Head of caudate nucleus (tissue), 42 donors: ENCODE measurements at regions of chr18 and their contacts with region 1.

Region 1: GRCh38 chr18:2932247-2933181 is 80.4 kb downstream of the LPIN2 start:
- DNase-seq: peak in 14 of 42 donors; percentile 22 to 83 (median 63)

Region 2: DNA sequence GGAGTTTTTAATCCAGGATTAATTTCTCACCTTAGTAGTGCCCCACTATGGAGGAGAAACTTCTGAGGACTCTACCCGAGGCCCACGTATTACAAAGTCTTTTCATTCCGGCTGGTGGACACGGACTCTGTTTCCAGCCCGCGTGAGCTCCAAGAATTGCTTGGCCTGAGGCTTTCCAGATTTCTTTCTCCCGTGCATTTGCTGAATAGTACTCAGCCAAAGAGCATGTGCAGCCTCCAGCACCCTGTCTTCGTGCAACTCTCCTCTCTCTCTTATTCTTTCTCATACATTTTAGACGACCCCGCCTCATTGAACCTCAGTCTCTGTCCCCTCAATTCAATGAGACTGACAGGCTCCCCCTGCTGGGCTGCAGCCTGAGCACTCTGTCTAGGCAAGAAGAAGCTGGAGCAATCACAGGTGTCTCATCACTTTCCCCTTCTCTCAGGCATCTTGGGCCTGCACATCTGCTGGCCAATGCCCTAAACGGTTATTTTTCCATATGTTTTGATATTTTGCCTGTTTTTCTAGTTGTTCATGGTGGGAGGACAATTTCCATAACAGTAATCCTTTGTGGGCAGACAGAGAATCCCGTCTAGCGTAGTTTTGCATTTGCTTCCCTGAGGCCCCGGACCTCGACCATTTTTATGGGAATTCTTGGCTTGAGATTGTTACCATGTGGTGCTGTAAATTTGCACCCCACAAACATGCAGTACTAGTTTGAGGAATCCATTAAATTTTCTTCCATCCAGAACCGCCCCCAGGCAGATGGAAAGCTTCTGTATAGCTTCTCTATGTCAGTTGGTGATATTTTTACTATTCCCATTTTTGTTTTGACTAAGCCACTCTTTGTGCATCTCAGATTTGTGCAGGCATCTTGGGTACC is 130.5 kb after region 1 on chr18:
- intact Hi-C with region 1: loop called (anchors 5 kb)
- DNase-seq: peak; percentile 57 to 89 (median 76)

Region 3: GRCh38 chr18:3151399-3152264 is 219.1 kb after region 1 on chr18:
- intact Hi-C with region 1: loop called (anchors 10 kb)
- DNase-seq: peak in 5 of 42 donors; percentile 7 to 27 (median 26)

Region 4: DNA sequence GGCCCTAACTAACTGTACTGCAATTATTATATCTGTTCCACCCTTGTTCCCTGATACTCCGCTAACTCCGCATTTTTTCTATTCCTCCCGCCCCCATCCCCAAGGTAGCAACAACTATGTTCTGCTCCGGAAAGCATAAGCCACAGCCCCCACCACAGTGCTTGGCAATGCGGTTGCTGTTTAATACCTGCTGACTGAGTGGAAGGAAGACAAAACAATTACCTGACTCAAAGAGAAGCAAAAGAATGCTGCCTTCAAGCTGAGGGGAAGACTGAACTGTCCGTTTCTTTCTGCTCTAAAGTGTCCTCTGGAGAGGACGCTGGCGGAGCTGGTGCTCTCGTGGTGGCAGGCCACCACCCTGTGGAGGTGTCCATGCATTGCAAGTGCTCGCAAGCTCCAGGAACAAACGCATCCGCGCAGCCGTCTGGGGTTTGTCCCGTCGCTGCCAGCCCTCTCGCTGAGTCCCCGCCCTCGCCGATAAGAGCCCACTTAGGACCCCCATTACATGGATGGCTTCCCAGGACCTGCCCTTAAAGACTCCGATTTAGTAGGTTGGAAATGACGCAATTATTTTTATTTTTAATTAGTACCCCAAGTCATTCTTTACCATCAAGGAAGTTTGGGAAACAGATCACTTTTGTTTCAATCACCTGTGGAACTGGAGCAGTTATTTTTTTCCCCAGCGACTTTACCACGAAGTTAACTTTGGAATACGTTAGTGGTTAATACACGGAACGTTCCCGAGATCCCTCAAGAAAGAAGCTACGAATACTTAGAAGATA is 313.5 kb after region 1 on chr18:
- intact Hi-C with region 1: loop called (anchors 5 kb)
- DNase-seq: peak; percentile 77 to 95 (median 88)